GM12878 (cell line): ENCODE measurements at regions of chr20 and their contacts with region 1.

Region 1: DNA sequence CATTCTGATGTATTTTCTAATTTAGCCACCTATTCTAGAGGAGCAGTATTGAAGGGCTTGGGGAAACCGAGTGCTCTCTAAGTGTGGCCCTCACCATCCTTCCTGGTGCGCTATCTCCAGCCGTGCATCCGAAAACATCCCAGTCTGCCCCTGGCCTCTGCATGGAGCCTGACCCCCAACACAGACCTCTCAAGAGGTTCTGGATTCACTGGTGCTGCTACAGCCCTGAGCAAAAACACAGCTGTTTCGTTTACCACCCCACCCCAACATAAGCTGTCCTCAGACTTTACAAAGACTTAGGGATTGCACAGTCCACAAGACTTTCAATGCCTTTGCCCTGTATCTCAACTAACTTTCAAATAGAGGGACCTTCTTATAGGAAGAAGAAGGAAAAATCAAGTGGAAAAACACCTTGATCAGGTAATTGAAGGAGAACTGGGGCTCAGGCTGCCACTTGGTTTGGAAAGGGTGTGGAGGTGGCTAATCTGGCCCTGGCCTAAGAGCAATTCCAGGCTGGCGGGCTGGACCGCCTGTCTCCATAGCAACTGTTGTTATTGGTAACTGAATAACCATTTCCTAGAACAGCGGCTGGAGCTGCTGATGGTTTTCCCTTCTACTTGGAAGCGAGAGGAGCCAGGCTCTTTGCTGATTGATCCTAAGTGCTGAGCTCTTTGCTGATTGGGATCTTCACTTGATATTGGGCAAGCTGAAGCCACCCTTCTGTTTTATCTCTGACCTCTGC is 90.2 kb upstream of the TOX2 start:
- DNase-seq: no peak
- ATAC-seq: peak; percentile 5
- H3K4me3 ChIP-seq: no peak overlapping the region
- H3K27ac ChIP-seq: no peak overlapping the region
- H3K4me1 ChIP-seq: peaks cover 24% of the 10 kb centered on the region
- H3K27me3 ChIP-seq: no peaks in the 10 kb centered on the region
- CTCF ChIP-seq: no peak
- EP300 ChIP-seq: no peak
- POLR2A ChIP-seq: no peak
- RAD21 ChIP-seq: no peak

Region 2: GRCh38 chr20:43767686-43768474 is 56.6 kb before region 1 on chr20:
- CTCF ChIA-PET with region 1: interaction called, 3 read pairs
- POLR2A ChIA-PET with region 1: no interaction called
- RAD21 ChIA-PET with region 1: no interaction called
- SMC1A ChIA-PET with region 1: interaction called, 10 read pairs
- in situ Hi-C with region 1: no loop called
- intact Hi-C with region 1: no loop called
- DNase-seq: no peak
- ATAC-seq: peak; percentile 22
- H3K4me3 ChIP-seq: no peak overlapping the region
- H3K27ac ChIP-seq: no peak overlapping the region
- H3K4me1 ChIP-seq: no peaks in the 10 kb centered on the region
- H3K27me3 ChIP-seq: no peaks in the 10 kb centered on the region
- CTCF ChIP-seq: no peak
- EP300 ChIP-seq: no peak
- POLR2A ChIP-seq: no peak
- RAD21 ChIP-seq: no peak

Region 3: DNA sequence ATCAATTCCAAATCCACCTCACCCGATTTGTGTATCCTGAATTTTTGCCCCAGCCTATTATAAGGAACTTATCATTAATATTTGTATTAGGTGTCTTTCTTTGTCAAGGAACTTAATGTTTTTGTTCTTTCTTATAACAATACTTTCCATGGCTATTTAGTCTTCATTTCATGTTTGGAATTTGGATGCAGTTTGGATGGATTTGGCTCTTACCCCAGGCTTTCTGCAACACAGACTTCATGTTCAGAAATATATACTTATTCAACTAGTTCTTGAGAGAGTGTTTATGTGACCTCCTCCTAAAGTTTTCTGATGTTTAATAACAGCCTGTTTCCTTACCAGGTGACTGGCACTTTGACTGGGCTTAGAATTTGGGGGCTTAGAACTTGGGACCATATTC is 54.3 kb after region 1 on chr20:
- CTCF ChIA-PET with region 1: no interaction called
- POLR2A ChIA-PET with region 1: no interaction called
- RAD21 ChIA-PET with region 1: no interaction called
- SMC1A ChIA-PET with region 1: no interaction called
- in situ Hi-C with region 1: no loop called
- intact Hi-C with region 1: no loop called
- DNase-seq: no peak
- ATAC-seq: no peak
- H3K4me3 ChIP-seq: no peak overlapping the region
- H3K27ac ChIP-seq: no peak overlapping the region
- H3K4me1 ChIP-seq: no peaks in the 10 kb centered on the region
- H3K27me3 ChIP-seq: no peaks in the 10 kb centered on the region
- CTCF ChIP-seq: no peak
- EP300 ChIP-seq: no peak
- POLR2A ChIP-seq: no peak
- RAD21 ChIP-seq: no peak